ENCODE measurements at regions of chr6 and their contacts with region 1.

Region 1: GRCh38 chr6:31971993-31972708 is at the start of gene DXO:
- DNase-seq: peak; percentile 97 to 99 (median 97)
- ATAC-seq: peak; percentile 94 to 96
- H3K4me3 ChIP-seq: peak within 1 kb of the TSS; percentile 71
- H3K27ac ChIP-seq: peak within 1 kb of the TSS; percentile 90
- H3K4me1 ChIP-seq: peaks cover 4% of the 10 kb centered on the region
- H3K27me3 ChIP-seq: no peaks in the 10 kb centered on the region
- total RNA-seq, gene DXO: 12.0 to 17.2 (median 16.1) TPM

Region 2: DNA sequence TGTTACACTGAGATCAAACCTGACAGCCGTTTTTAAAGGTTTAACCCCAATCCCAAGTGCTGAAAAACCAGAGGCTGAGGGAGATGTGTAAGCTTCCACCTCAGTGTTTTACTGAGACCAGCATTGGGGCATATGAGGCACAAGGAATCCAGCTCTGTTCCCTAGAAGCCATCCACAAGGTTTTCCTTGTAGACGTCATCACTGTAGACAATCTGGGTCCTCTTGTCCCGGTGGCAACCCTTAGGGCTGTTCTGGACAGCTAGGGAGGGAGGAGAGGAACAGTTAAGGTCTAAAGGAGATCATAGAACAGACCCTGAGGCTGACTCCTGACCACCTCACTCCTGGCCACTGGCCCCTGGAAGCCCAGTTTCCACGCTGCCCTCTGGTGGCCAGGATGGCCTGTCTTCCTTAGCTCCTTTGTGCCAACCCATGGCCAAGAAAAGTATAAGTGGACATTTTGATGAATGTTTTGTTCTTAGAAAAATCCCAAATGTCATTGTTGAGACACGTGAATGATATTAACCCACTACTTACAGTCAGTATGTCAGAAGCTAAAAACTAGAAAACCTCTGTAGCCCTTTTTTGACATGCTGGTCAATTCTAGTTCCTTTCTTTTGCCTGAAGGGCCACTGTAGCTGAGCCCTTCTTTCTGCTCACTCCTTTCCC is 19.9 kb before region 1 on chr6:
- intact Hi-C with region 1: no loop called
- DNase-seq: peak; percentile 62 to 89 (median 85)
- ATAC-seq: peak; percentile 52 to 63
- H3K4me3 ChIP-seq: no peak overlapping the region
- H3K27ac ChIP-seq: no peak overlapping the region
- H3K4me1 ChIP-seq: no peaks in the 10 kb centered on the region
- H3K27me3 ChIP-seq: no peaks in the 10 kb centered on the region

Region 3: GRCh38 chr6:32971581-32972352 is 999.6 kb after region 1 on chr6:
- intact Hi-C with region 1: loop called in 1 of 4 experiments (anchors 10 kb)
- DNase-seq: peak; percentile 99 to 100 (median 99)
- ATAC-seq: peak; percentile 69
- H3K4me3 ChIP-seq: peak overlapping the region; percentile 90
- H3K27ac ChIP-seq: peak overlapping the region; percentile 98
- H3K4me1 ChIP-seq: no peaks in the 10 kb centered on the region
- H3K27me3 ChIP-seq: no peaks in the 10 kb centered on the region